Head of caudate nucleus (tissue), 42 donors: ENCODE measurements at regions of chr20 and their contacts with region 1.

Region 1: GRCh38 chr20:2470423-2471193 is at the start of gene SNRPB:
- DNase-seq: peak; percentile 95 to 99 (median 98)

Region 2: DNA sequence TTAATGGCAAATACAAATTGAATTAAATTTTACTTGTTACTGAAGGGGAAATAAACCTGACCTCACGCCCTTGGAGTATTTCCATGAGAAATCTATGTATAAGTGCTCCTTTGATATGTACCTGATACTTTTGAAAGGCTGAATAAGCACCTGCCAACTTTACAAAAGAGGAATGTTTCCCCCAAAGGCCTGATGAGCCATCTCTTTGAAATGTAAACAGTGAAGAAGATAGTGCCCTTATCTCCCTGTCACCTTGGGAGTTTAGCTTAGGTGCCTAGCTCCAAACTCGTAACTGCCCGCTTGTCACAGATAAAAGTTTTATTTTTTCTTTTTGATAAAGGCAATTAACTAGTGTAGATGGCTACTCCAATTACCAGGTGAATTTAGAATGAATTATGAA is 39.2 kb after region 1 on chr20:
- intact Hi-C with region 1: loop called (anchors 5 kb)
- DNase-seq: no peak

Region 3: GRCh38 chr20:2619961-2620595 is 149.5 kb after region 1 on chr20:
- intact Hi-C with region 1: no loop called
- DNase-seq: peak in 13 of 42 donors; percentile 3 to 55 (median 23)